ENCODE measurements at regions of chr10 and their contacts with region 1.

Region 1: GRCh38 chr10:119750391-119751230 is 24.8 kb downstream of the INPP5F start:
- DNase-seq: peak; percentile 36
- ATAC-seq: peak; percentile 95
- H3K4me3 ChIP-seq: no peak overlapping the region
- H3K27ac ChIP-seq: no peak overlapping the region
- H3K4me1 ChIP-seq: no peaks in the 10 kb centered on the region
- H3K27me3 ChIP-seq: no peaks in the 10 kb centered on the region
- CTCF ChIP-seq: peak; percentile 93
- EP300 ChIP-seq: no peak; a peak in 1 of 4 replicates
- POLR2A ChIP-seq: no peak
- RAD21 ChIP-seq: peak; percentile 99

Region 2: GRCh38 chr10:119725828-119726675 is 24.6 kb before region 1 on chr10 and contains the start of gene INPP5F:
- CTCF ChIA-PET with region 1: interaction called, 47 read pairs
- POLR2A ChIA-PET with region 1: interaction called, 7 read pairs
- RAD21 ChIA-PET with region 1: interaction called, 28 read pairs
- SMC1A ChIA-PET with region 1: interaction called, 23 read pairs
- in situ Hi-C with region 1: no loop called
- intact Hi-C with region 1: no loop called
- DNase-seq: peak; percentile 88
- ATAC-seq: peak; percentile 88
- H3K4me3 ChIP-seq: peak within 1 kb of the TSS; percentile 95
- H3K27ac ChIP-seq: peak within 1 kb of the TSS; percentile 82
- H3K4me1 ChIP-seq: peaks cover 17% of the 10 kb centered on the region
- H3K27me3 ChIP-seq: no peaks in the 10 kb centered on the region
- CTCF ChIP-seq: peak in 2 of 3 experiments; percentile 17 to 38; a peak in 3 of 6 replicates
- EP300 ChIP-seq: no peak
- POLR2A ChIP-seq: peak; percentile 59; the same call in 1 of the 2 replicates
- RAD21 ChIP-seq: no peak
- polyA plus RNA-seq, gene INPP5F: 6.0 to 13.4 TPM

Region 3: GRCh38 chr10:119761106-119761505 is 10.5 kb after region 1 on chr10:
- CTCF ChIA-PET with region 1: interaction called, 18 read pairs
- POLR2A ChIA-PET with region 1: interaction called, 6 read pairs
- RAD21 ChIA-PET with region 1: interaction called, 7 read pairs
- SMC1A ChIA-PET with region 1: interaction called, 22 read pairs
- in situ Hi-C with region 1: no loop called
- intact Hi-C with region 1: no loop called
- DNase-seq: no peak
- ATAC-seq: no peak
- H3K4me3 ChIP-seq: no peak overlapping the region
- H3K27ac ChIP-seq: no peak overlapping the region
- H3K4me1 ChIP-seq: no peaks in the 10 kb centered on the region
- H3K27me3 ChIP-seq: no peaks in the 10 kb centered on the region
- CTCF ChIP-seq: no peak
- EP300 ChIP-seq: no peak
- POLR2A ChIP-seq: no peak
- RAD21 ChIP-seq: no peak

Region 4: DNA sequence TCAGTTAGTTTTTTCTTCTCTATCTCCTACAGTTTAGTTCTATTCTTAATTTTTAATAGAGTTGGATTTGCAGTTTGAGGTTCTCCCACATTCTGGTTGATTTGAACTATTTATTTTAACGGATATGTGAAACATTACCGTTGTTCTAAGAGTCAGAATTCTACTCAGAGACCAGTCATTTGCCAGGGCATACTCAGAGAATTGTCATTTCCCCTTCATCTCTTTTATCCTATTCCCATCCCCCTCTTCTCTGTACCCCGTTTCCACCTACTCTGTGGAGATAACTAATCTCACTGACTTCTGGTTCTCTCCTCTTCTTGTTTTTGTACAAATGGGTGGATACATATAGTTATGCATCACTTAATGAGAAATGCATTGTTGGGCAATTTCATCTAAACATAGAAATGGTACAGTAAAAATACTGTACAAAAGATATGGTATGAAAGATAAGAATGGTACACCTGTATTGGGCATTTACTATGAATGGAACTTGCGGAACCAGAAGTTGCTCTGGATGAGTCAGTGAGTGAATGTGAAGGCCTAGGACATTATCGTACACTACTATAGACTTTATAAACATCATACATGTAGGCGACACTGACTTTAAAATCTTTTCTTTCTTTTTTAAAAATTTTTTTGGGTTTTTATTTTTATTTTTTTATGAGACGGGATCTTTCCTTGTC is 28.3 kb after region 1 on chr10:
- CTCF ChIA-PET with region 1: interaction called, 20 read pairs
- POLR2A ChIA-PET with region 1: interaction called, 3 read pairs
- RAD21 ChIA-PET with region 1: interaction called, 7 read pairs
- SMC1A ChIA-PET with region 1: interaction called, 27 read pairs
- in situ Hi-C with region 1: no loop called
- intact Hi-C with region 1: no loop called
- DNase-seq: no peak
- ATAC-seq: no peak
- H3K4me3 ChIP-seq: no peak overlapping the region
- H3K27ac ChIP-seq: no peak overlapping the region
- H3K4me1 ChIP-seq: peaks cover 4% of the 10 kb centered on the region
- H3K27me3 ChIP-seq: no peaks in the 10 kb centered on the region
- CTCF ChIP-seq: no peak
- EP300 ChIP-seq: no peak
- POLR2A ChIP-seq: no peak
- RAD21 ChIP-seq: no peak

Region 5: GRCh38 chr10:119807960-119808697 is 57.5 kb after region 1 on chr10:
- CTCF ChIA-PET with region 1: interaction called, 12 read pairs
- POLR2A ChIA-PET with region 1: no interaction called
- RAD21 ChIA-PET with region 1: interaction called, 10 read pairs
- SMC1A ChIA-PET with region 1: interaction called, 16 read pairs
- in situ Hi-C with region 1: no loop called
- intact Hi-C with region 1: loop called (anchors 5 kb)
- DNase-seq: no peak
- ATAC-seq: peak; percentile 93
- H3K4me3 ChIP-seq: no peak overlapping the region
- H3K27ac ChIP-seq: no peak overlapping the region
- H3K4me1 ChIP-seq: peaks cover 2% of the 10 kb centered on the region; the same call in 1 of the 2 replicates
- H3K27me3 ChIP-seq: no peaks in the 10 kb centered on the region
- CTCF ChIP-seq: no peak
- EP300 ChIP-seq: no peak
- POLR2A ChIP-seq: no peak
- RAD21 ChIP-seq: no peak

Region 6: GRCh38 chr10:119849031-119849789 is 98.6 kb after region 1 on chr10:
- CTCF ChIA-PET with region 1: interaction called, 243 read pairs
- POLR2A ChIA-PET with region 1: no interaction called
- RAD21 ChIA-PET with region 1: interaction called, 3 read pairs
- SMC1A ChIA-PET with region 1: interaction called, 164 read pairs
- in situ Hi-C with region 1: no loop called
- intact Hi-C with region 1: no loop called
- DNase-seq: no peak
- ATAC-seq: no peak
- H3K4me3 ChIP-seq: no peak overlapping the region
- H3K27ac ChIP-seq: no peak overlapping the region
- H3K4me1 ChIP-seq: no peaks in the 10 kb centered on the region
- H3K27me3 ChIP-seq: no peaks in the 10 kb centered on the region
- CTCF ChIP-seq: no peak
- EP300 ChIP-seq: no peak
- POLR2A ChIP-seq: no peak
- RAD21 ChIP-seq: no peak

Region 7: DNA sequence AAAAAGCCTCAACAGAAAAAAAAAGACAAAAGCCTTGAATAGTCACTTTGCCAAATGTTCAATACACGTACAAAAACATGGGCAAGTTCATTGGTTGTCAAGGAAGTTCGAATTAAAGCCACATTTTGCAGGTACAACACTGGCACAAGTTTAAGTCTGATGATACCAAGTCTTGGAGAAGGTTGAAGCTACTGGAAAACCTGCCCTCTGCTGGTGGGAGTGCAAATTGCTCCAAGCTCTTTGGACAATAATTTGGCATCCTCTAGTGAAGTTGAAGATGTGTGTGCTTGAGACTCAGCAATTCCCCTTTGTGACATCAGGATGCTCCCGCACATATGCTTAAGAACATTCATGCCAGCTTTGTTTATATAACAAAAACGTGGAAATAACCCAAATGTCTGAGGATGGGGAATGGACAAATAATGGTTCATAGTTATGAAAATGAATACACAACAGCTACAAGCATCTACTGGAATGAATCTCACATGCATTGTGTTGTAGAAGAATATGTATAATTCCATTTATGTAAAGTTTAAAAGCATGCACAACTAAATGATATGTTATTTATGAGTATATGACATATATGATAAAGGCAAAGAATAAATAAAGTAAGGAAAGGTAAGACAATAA is 586.4 kb after region 1 on chr10:
- CTCF ChIA-PET with region 1: interaction called, 7 read pairs
- POLR2A ChIA-PET with region 1: no interaction called
- RAD21 ChIA-PET with region 1: no interaction called
- SMC1A ChIA-PET with region 1: interaction called, 3 read pairs
- in situ Hi-C with region 1: loop called (anchors 10 kb)
- intact Hi-C with region 1: loop called (anchors 10 kb)
- DNase-seq: no peak
- ATAC-seq: peak; percentile 75
- H3K4me3 ChIP-seq: no peak overlapping the region
- H3K27ac ChIP-seq: no peak overlapping the region
- H3K4me1 ChIP-seq: no peaks in the 10 kb centered on the region
- H3K27me3 ChIP-seq: no peaks in the 10 kb centered on the region
- CTCF ChIP-seq: peak; percentile 77 to 81 (median 78)
- EP300 ChIP-seq: no peak
- POLR2A ChIP-seq: no peak
- RAD21 ChIP-seq: peak; percentile 51

Measured in GM12878 (cell line).